ENCODE measurements at regions of chr3 and their contacts with region 1.

Region 1: DNA sequence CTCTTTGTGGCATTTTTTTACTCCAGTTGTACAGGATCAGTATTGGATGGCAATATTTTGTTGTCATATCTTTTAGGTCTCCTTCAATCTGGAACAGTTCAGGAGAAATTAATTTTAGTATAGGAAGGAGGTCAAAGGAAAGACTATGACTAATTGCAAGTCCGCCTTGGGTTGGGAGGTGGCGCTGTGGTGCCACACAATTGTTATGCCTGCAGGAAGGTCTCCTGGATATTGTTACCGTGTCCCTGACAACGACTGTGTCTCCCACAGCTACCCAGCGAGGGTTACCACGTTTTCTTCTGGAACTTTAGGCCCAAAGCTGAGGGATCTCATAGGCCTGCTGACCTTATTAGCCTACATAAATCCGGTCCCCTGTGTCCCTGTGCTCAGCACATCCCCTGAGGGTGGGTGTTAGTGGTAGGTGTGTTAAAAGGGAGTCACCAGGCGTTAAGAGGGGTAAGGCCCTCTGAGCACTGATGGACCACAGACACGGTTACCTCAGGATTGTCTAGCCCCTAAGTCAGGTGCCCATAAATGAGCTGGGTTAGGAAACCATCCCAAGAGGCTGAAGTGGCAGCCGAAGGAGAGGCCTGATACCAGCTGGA is 31.5 kb downstream of the KCNAB1 start:
- DNase-seq: peak; percentile 50 to 58 (median 56)
- ATAC-seq: peak; percentile 60 to 79 (median 72)
- H3K4me3 ChIP-seq: no peak overlapping the region
- H3K27ac ChIP-seq: no peak overlapping the region
- H3K4me1 ChIP-seq: no peaks in the 10 kb centered on the region
- H3K27me3 ChIP-seq: no peaks in the 10 kb centered on the region
- CTCF ChIP-seq: peak; percentile 55 to 71 (median 62)
- POLR2A ChIP-seq: no peak

Region 2: GRCh38 chr3:156201411-156202405 is 49.8 kb after region 1 on chr3:
- intact Hi-C with region 1: no loop called
- DNase-seq: no peak
- ATAC-seq: no peak
- H3K4me3 ChIP-seq: no peak overlapping the region
- H3K27ac ChIP-seq: no peak overlapping the region
- H3K4me1 ChIP-seq: no peaks in the 10 kb centered on the region
- H3K27me3 ChIP-seq: no peaks in the 10 kb centered on the region
- CTCF ChIP-seq: no peak
- POLR2A ChIP-seq: no peak

Region 3: DNA sequence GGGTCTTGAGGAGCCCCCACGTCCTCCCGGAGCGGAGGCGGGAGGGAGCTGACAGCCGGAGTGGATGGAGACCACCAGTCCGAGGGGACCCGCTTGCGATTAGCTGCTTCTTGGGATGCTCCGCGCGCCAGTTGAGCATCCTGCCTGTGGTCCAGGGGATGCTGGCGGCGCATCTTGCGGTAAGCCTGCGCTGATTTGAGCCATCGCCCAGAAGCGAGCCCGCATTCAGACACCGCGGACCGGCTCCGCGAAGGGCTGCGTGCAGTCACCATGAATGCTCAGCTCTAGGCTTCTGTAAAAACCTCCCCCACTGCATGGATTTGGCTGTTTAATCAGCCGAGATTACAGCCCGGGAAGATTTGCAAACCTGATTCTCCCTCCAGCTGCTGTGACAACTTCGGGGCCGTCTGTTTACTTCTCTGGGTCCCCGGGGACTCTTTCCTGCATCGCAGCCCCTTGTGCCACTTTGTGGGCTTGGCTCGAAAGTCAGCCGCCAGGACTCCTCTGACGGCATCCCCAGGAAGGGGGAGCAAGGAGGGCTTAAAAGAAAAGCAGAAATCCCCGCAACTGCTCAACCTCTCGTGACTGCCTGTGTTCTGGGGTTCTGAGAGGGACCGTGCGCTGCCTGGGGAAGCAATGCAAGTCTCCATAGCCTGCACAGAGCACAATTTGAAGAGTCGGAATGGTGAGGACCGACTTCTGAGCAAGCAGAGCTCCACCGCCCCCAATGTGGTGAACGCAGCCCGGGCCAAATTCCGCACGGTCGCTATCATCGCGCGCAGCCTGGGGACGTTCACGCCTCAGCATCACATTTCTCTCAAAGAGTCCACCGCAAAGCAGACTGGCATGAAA is 139.6 kb after region 1 on chr3:
- intact Hi-C with region 1: no loop called
- DNase-seq: no peak
- ATAC-seq: peak; percentile 22 to 50 (median 38)
- H3K4me3 ChIP-seq: peak overlapping the region in 1 of 3 donors; percentile 7
- H3K27ac ChIP-seq: no peak overlapping the region
- H3K4me1 ChIP-seq: no peaks in the 10 kb centered on the region
- H3K27me3 ChIP-seq: peaks cover 0 to 14% of the 10 kb centered on the region in 2 donors
- CTCF ChIP-seq: no peak
- POLR2A ChIP-seq: no peak

Region 4: DNA sequence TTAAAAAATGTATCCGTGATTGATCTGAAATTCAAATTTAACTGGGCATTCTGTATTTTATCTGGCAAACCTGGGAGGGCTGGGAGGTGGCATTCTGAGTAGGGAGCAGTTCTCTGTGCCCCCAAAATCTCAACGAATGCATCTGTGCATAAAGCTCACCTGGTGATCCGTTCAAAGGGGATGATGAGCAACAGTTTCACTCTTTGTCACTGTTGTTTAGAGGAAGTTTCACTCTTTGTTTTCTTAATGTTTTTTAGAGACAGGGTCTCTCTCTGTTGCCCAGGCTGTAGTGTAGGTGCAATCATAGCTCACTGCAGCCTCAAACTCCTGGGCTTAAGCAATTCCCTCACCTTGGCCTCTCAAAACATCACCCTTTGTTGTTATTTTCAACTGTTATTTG is 216.3 kb after region 1 on chr3:
- intact Hi-C with region 1: no loop called
- DNase-seq: no peak
- ATAC-seq: no peak
- H3K4me3 ChIP-seq: no peak overlapping the region
- H3K27ac ChIP-seq: no peak overlapping the region
- H3K4me1 ChIP-seq: no peaks in the 10 kb centered on the region
- H3K27me3 ChIP-seq: no peaks in the 10 kb centered on the region
- CTCF ChIP-seq: no peak
- POLR2A ChIP-seq: no peak

Region 5: GRCh38 chr3:156509189-156510174 is 357.6 kb after region 1 on chr3:
- intact Hi-C with region 1: loop called in 1 of 2 experiments (anchors 10 kb)
- DNase-seq: no peak
- ATAC-seq: peak; percentile 72 to 87 (median 82)
- H3K4me3 ChIP-seq: no peak overlapping the region
- H3K27ac ChIP-seq: no peak overlapping the region
- H3K4me1 ChIP-seq: no peaks in the 10 kb centered on the region
- H3K27me3 ChIP-seq: no peaks in the 10 kb centered on the region
- CTCF ChIP-seq: peak; percentile 57 to 73 (median 65)
- POLR2A ChIP-seq: no peak

Measured in right lobe of liver (tissue), 6 donors.